ENCODE measurements at regions of chr2 and their contacts with region 1.

Region 1: DNA sequence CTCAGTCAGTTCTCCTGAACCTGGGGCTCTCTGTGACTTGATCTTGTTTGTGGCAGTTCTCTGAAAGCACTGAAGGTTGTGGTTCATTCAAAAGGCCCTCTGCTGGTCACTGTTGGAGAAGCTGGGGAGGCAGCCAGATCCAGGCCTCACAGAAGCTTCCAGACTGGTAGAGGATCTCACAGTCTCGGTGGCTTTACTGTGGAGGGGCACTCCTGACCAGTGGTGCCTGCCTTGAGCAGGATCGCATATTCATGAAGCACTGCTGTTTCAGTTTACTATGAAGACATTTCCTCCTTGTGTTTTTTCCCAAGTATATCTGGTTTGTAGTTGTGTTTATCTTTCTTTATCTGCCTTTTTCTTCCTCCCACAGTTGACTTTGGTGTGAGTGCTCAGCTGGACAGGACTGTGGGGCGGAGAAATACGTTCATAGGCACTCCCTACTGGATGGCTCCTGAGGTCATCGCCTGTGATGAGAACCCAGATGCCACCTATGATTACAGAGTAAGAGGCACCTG is 133.9 kb downstream of the MAP4K4 start:
- DNase-seq: peak; percentile 78
- ATAC-seq: peak; percentile 47
- H3K4me3 ChIP-seq: no peak overlapping the region
- H3K27ac ChIP-seq: peak overlapping the region; percentile 28
- H3K4me1 ChIP-seq: peaks cover 25% of the 10 kb centered on the region
- H3K27me3 ChIP-seq: no peaks in the 10 kb centered on the region
- CTCF ChIP-seq: peak; percentile 71
- POLR2A ChIP-seq: no peak
- RAD21 ChIP-seq: peak; percentile 80

Region 2: GRCh38 chr2:101361121-101361870 is 470.1 kb before region 1 on chr2:
- CTCF ChIA-PET with region 1: no interaction called
- POLR2A ChIA-PET with region 1: interaction called, 17 read pairs
- dilution Hi-C with region 1: no loop called
- in situ Hi-C with region 1: no loop called
- intact Hi-C with region 1: no loop called
- DNase-seq: no peak
- ATAC-seq: no peak
- H3K4me3 ChIP-seq: no peak overlapping the region
- H3K27ac ChIP-seq: no peak overlapping the region
- H3K4me1 ChIP-seq: no peaks in the 10 kb centered on the region
- H3K27me3 ChIP-seq: peaks cover 32% of the 10 kb centered on the region
- CTCF ChIP-seq: no peak
- POLR2A ChIP-seq: no peak
- RAD21 ChIP-seq: no peak

Region 3: DNA sequence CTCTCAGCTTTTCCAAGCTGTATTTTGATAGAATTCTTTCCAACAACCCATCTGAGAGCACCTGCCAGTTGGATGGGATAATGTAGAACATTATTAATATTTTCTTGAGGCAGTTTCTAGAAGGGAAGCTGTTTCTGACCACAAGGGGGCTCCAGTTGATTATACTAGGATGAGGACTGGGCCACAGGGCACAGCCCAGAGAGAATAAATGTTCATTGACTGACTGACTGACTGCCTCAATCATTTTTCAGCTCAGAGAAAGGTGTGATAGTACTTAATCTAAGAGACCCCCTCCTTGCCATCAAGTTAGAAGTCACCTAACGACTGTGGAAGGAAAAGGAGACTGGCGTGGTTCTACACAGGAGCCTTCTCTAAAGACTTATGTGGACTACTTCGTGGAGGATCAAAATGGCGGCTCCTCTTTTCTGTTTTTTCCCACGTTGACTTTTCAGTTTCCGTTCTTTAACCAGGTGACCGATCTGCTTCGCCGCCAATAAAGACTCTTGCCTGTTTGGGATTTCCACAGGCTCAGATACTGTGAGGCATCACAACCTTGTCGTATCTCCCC is 412.2 kb before region 1 on chr2:
- CTCF ChIA-PET with region 1: interaction called, 10 read pairs
- POLR2A ChIA-PET with region 1: no interaction called
- dilution Hi-C with region 1: no loop called
- in situ Hi-C with region 1: no loop called
- intact Hi-C with region 1: loop called (anchors 1 kb)
- DNase-seq: peak; percentile 74
- ATAC-seq: peak; percentile 89
- H3K4me3 ChIP-seq: no peak overlapping the region
- H3K27ac ChIP-seq: no peak overlapping the region
- H3K4me1 ChIP-seq: no peaks in the 10 kb centered on the region
- H3K27me3 ChIP-seq: no peaks in the 10 kb centered on the region
- CTCF ChIP-seq: peak; percentile 92
- POLR2A ChIP-seq: no peak
- RAD21 ChIP-seq: peak; percentile 93

Region 4: DNA sequence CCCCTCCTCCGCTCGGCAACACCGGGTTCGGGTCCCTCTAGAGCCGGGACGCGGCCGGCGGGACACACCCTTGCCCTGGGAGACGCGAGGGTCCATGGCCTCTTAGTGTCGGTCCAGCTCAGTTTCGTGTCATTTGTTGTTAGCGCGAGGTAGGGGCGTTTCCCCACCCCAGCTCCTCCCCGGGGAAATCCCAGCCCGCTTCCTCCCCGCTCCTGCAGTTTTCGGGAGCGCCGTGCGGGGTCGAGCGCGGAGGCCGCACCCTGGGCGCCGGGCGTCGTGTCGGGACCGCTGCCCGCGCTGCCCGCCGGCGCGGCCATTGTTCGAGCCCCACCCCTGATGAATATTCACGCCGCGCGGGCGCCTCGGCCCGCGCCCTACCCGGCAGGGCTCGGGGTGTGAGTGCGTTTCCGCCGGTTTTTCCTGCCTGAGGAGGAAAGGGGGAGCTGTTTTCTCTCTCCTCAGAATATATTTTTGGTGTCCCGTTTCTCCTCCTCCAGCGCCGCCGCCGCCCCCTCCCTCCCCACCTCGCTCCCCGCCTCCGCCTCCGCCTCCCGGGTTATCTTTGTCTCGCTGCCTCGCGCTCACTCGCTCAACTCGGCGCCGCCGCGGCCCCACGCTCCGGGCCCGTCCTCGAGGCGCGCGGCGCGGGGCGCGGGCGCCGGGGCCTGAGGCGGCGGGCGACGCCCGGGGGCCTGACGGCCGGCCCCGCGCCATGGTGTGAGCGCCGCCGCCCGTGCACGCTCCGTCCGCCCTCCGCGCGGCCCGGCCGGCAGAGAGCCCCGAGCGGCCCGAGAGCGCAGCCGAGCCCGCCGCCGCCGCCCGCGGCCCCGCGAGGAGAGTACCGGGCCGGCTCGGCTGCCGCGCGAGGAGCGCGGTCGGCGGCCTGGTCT is 134.0 kb before region 1 on chr2 and contains the start of gene MAP4K4:
- CTCF ChIA-PET with region 1: interaction called, 7 read pairs
- POLR2A ChIA-PET with region 1: interaction called, 8 read pairs
- dilution Hi-C with region 1: no loop called
- in situ Hi-C with region 1: loop called (anchors 5 kb)
- intact Hi-C with region 1: loop called (anchors 1 kb)
- DNase-seq: peak; percentile 77
- ATAC-seq: peak; percentile 79
- H3K4me3 ChIP-seq: peak within 1 kb of the TSS; percentile 86
- H3K27ac ChIP-seq: peak within 1 kb of the TSS; percentile 89
- H3K4me1 ChIP-seq: peaks cover 6% of the 10 kb centered on the region
- H3K27me3 ChIP-seq: no peaks in the 10 kb centered on the region
- CTCF ChIP-seq: 0 out of 2 replicates have a peak, but pooled peaks have one; percentile 12
- POLR2A ChIP-seq: peak; percentile 70
- RAD21 ChIP-seq: peak; percentile 17
- total RNA-seq, gene MAP4K4: 124 and 130 TPM in 2 replicates

Region 5: GRCh38 chr2:101860157-101860556 is 28.7 kb after region 1 on chr2:
- CTCF ChIA-PET with region 1: no interaction called
- POLR2A ChIA-PET with region 1: no interaction called
- dilution Hi-C with region 1: no loop called
- in situ Hi-C with region 1: no loop called
- intact Hi-C with region 1: no loop called
- DNase-seq: no peak
- ATAC-seq: no peak
- H3K4me3 ChIP-seq: no peak overlapping the region
- H3K27ac ChIP-seq: no peak overlapping the region
- H3K4me1 ChIP-seq: peaks cover 3% of the 10 kb centered on the region; the same call in 1 of the 2 replicates
- H3K27me3 ChIP-seq: no peaks in the 10 kb centered on the region
- CTCF ChIP-seq: no peak
- POLR2A ChIP-seq: no peak
- RAD21 ChIP-seq: no peak

Region 6: DNA sequence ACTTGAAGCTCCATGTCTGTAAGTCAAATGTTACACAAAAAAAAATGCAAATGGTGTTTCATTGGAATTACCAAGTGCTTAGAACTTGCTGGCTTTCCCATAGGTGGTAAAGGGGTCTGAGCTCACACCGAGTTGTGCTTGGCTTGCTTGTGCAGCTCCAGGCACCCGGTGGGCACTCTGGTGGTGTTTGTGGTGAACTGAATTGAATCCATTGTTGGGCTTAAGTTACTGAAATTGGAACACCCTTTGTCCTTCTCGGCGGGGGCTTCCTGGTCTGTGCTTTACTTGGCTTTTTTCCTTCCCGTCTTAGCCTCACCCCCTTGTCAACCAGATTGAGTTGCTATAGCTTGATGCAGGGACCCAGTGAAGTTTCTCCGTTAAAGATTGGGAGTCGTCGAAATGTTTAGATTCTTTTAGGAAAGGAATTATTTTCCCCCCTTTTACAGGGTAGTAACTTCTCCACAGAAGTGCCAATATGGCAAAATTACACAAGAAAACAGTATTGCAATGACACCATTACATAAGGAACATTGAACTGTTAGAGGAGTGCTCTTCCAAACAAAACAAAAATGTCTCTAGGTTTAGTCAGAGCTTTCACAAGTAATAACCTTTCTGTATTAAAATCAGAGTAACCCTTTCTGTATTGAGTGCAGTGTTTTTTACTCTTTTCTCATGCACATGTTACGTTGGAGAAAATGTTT is 62.4 kb after region 1 on chr2:
- CTCF ChIA-PET with region 1: no interaction called
- POLR2A ChIA-PET with region 1: no interaction called
- dilution Hi-C with region 1: no loop called
- in situ Hi-C with region 1: no loop called
- intact Hi-C with region 1: no loop called
- DNase-seq: no peak
- ATAC-seq: peak; percentile 44; the same call in 1 of the 2 replicates
- H3K4me3 ChIP-seq: no peak overlapping the region
- H3K27ac ChIP-seq: peak overlapping the region; percentile 20; the same call in 1 of the 2 replicates
- H3K4me1 ChIP-seq: peaks cover 2% of the 10 kb centered on the region; the same call in 1 of the 2 replicates
- H3K27me3 ChIP-seq: no peaks in the 10 kb centered on the region
- CTCF ChIP-seq: no peak
- POLR2A ChIP-seq: no peak
- RAD21 ChIP-seq: no peak

Measured in IMR-90 (cell line).